ENCODE measurements at regions of chr7 and their contacts with region 1.

Region 1: GRCh38 chr7:28433699-28434219 is 21.4 kb downstream of the CREB5 start:
- DNase-seq: no peak
- ATAC-seq: peak; percentile 49
- H3K4me3 ChIP-seq: no peak overlapping the region
- H3K27ac ChIP-seq: no peak overlapping the region
- H3K4me1 ChIP-seq: no peaks in the 10 kb centered on the region
- H3K27me3 ChIP-seq: no peaks in the 10 kb centered on the region
- CTCF ChIP-seq: no peak
- EP300 ChIP-seq: no peak
- POLR2A ChIP-seq: no peak
- RAD21 ChIP-seq: no peak

Region 2: DNA sequence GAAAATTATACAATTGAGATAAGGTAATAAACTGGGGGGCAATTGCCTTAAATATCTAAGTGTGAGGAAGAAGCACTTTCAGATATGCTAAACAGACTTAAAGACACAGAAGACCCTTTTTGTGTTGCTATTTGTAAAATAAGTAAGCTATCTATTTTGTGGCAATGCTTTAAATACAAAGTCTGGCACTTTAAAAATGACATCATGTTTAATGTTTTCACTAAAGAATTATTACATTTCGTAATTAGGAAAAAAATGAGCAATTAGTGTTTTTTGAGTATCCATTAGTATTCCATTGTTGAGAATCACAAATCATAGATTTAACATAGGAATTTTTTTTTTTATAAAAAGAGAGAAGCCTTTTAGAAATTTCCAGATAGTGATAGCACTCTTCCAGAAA is 19.3 kb before region 1 on chr7:
- CTCF ChIA-PET with region 1: interaction called, 3 read pairs
- POLR2A ChIA-PET with region 1: interaction called, 3 read pairs
- RAD21 ChIA-PET with region 1: interaction called, 10 read pairs
- SMC1A ChIA-PET with region 1: interaction called, 17 read pairs
- in situ Hi-C with region 1: no loop called
- intact Hi-C with region 1: no loop called
- DNase-seq: no peak
- ATAC-seq: no peak
- H3K4me3 ChIP-seq: no peak overlapping the region
- H3K27ac ChIP-seq: no peak overlapping the region
- H3K4me1 ChIP-seq: 0 out of 2 replicates have a peak, but pooled peaks cover under 1% of the 10 kb centered on the region
- H3K27me3 ChIP-seq: peaks cover 0 to 11% of the 10 kb centered on the region in 2 experiments; a peak in 2 of 4 replicates
- CTCF ChIP-seq: no peak
- EP300 ChIP-seq: no peak
- POLR2A ChIP-seq: no peak
- RAD21 ChIP-seq: no peak

Region 3: DNA sequence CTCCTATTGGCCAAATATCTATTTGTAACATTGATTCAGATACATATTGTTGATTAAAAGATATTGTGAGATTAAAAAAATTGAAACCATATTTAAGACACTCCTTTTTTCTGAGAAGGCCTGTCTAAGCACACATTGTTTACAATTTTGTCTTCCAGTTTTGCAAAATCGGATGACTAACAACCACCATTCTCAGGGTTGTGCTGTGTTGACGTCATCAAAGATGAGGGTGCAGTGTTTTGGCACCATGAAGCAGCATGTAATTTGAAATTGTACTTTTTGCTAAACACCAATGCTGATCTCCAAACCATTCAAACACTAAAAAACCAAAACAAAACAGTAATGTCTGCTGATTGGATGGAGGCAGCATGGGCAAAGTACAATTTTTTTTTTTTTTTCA is 14.0 kb before region 1 on chr7:
- CTCF ChIA-PET with region 1: interaction called, 7 read pairs
- POLR2A ChIA-PET with region 1: interaction called, 4 read pairs
- RAD21 ChIA-PET with region 1: interaction called, 10 read pairs
- SMC1A ChIA-PET with region 1: interaction called, 17 read pairs
- in situ Hi-C with region 1: no loop called
- intact Hi-C with region 1: no loop called
- DNase-seq: no peak
- ATAC-seq: no peak
- H3K4me3 ChIP-seq: no peak overlapping the region
- H3K27ac ChIP-seq: no peak overlapping the region
- H3K4me1 ChIP-seq: no peaks in the 10 kb centered on the region
- H3K27me3 ChIP-seq: no peaks in the 10 kb centered on the region
- CTCF ChIP-seq: no peak
- EP300 ChIP-seq: no peak
- POLR2A ChIP-seq: no peak
- RAD21 ChIP-seq: no peak

Region 4: GRCh38 chr7:28448708-28449107 is 14.9 kb after region 1 on chr7:
- CTCF ChIA-PET with region 1: interaction called, 6 read pairs
- POLR2A ChIA-PET with region 1: no interaction called
- RAD21 ChIA-PET with region 1: interaction called, 10 read pairs
- SMC1A ChIA-PET with region 1: interaction called, 13 read pairs
- in situ Hi-C with region 1: no loop called
- intact Hi-C with region 1: no loop called
- DNase-seq: no peak
- ATAC-seq: peak; percentile 79
- H3K4me3 ChIP-seq: no peak overlapping the region
- H3K27ac ChIP-seq: no peak overlapping the region
- H3K4me1 ChIP-seq: no peaks in the 10 kb centered on the region
- H3K27me3 ChIP-seq: no peaks in the 10 kb centered on the region
- CTCF ChIP-seq: no peak
- EP300 ChIP-seq: no peak
- POLR2A ChIP-seq: no peak
- RAD21 ChIP-seq: no peak